ENCODE measurements at regions of chr21 and their contacts with region 1.

Region 1: GRCh38 chr21:32412162-32413014 is at the start of gene EVA1C:
- DNase-seq: peak in 1 of 2 experiments; percentile 79
- H3K4me3 ChIP-seq: peak within 1 kb of the TSS; percentile 24 to 63 (median 51)
- H3K27ac ChIP-seq: no peak within 1 kb of the TSS
- H3K4me1 ChIP-seq: peaks cover 3 to 26% (median 10%) of the 10 kb centered on the region in 4 experiments
- H3K27me3 ChIP-seq: peaks cover 18 to 57% (median 37%) of the 10 kb centered on the region in 4 experiments
- CTCF ChIP-seq: 0 out of 4 replicates have a peak, but pooled peaks of 1 of the 3 experiments have one; percentile 6
- EP300 ChIP-seq: no peak
- POLR2A ChIP-seq: no peak
- RAD21 ChIP-seq: peak in 1 of 2 experiments; percentile 14; a peak in 1 of 4 replicates
- total RNA-seq, gene EVA1C: 3.6 and 4.3 TPM in 2 replicates

Region 2: GRCh38 chr21:32562426-32562825 is 150.0 kb after region 1 on chr21:
- CTCF ChIA-PET with region 1: interaction called, 13 read pairs
- POLR2A ChIA-PET with region 1: interaction called, 3 read pairs
- DNase-seq: no peak
- H3K4me3 ChIP-seq: peak overlapping the region in 1 of 4 experiments; percentile 41; a peak in 1 of 8 replicates
- H3K27ac ChIP-seq: peak overlapping the region; percentile 53; the same call in 1 of the 2 replicates
- H3K4me1 ChIP-seq: peaks cover 4 to 11% (median 8%) of the 10 kb centered on the region in 4 experiments; a peak in 5 of 7 replicates
- H3K27me3 ChIP-seq: no peaks in the 10 kb centered on the region
- CTCF ChIP-seq: peak; percentile 8 to 66 (median 61)
- EP300 ChIP-seq: no peak
- POLR2A ChIP-seq: no peak
- RAD21 ChIP-seq: peak; percentile 75 to 81

Region 3: GRCh38 chr21:32578107-32578692 is 165.8 kb after region 1 on chr21:
- CTCF ChIA-PET with region 1: interaction called, 112 read pairs
- POLR2A ChIA-PET with region 1: no interaction called
- DNase-seq: peak; percentile 23 to 70
- H3K4me3 ChIP-seq: no peak overlapping the region
- H3K27ac ChIP-seq: no peak overlapping the region
- H3K4me1 ChIP-seq: no peaks in the 10 kb centered on the region
- H3K27me3 ChIP-seq: no peaks in the 10 kb centered on the region
- CTCF ChIP-seq: peak; percentile 75 to 94 (median 79)
- EP300 ChIP-seq: no peak
- POLR2A ChIP-seq: no peak
- RAD21 ChIP-seq: peak; percentile 79 to 84